ENCODE measurements at regions of chr4 and their contacts with region 1.

Region 1: DNA sequence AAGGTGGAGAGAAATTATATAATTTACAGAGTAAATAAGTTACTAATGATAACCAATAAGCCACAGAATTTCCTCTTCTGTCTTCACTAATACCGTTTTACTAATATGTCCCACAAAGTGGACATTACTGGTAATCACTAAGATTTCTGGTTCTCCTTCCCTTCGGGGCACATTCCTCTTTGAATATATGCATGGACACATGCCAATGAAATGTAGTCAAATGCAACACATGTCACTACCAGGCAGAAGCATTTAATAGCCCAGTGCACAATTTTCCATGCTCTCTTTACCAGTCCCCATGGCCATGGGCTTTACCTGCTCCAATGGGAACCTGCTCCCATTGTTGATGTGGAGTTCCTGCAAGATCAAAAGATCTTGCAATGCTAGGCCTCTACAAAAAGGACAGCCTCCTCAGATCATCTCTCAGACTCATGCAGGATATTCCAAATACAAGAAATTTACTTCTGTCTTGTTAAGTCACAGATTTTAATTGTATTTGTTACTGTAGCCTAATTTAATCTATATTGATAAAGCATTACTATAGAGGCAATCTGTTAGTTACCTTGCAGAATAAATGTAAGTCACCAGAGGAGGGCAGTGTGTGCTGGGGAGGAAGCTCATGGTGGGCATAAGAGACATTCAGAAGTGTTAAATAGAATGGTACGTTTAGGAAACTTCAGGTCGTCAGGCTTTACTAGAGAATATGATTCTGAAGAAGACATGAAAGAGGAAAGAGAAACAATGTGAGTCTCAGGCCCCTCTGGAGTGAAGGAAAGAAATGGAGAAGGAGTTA is 37.1 kb upstream of the INPP4B start:
- DNase-seq: no peak
- H3K4me3 ChIP-seq: no peak overlapping the region
- H3K27ac ChIP-seq: no peak overlapping the region
- H3K4me1 ChIP-seq: no peaks in the 10 kb centered on the region
- H3K27me3 ChIP-seq: no peaks in the 10 kb centered on the region
- CTCF ChIP-seq: peak in 1 of 4 experiments; percentile 21
- POLR2A ChIP-seq: no peak

Region 2: GRCh38 chr4:143025081-143025704 is 142.0 kb after region 1 on chr4:
- intact Hi-C with region 1: loop called (anchors 5 kb)
- DNase-seq: no peak
- H3K4me3 ChIP-seq: no peak overlapping the region
- H3K27ac ChIP-seq: no peak overlapping the region
- H3K4me1 ChIP-seq: no peaks in the 10 kb centered on the region
- H3K27me3 ChIP-seq: no peaks in the 10 kb centered on the region
- CTCF ChIP-seq: no peak
- POLR2A ChIP-seq: no peak

Region 3: DNA sequence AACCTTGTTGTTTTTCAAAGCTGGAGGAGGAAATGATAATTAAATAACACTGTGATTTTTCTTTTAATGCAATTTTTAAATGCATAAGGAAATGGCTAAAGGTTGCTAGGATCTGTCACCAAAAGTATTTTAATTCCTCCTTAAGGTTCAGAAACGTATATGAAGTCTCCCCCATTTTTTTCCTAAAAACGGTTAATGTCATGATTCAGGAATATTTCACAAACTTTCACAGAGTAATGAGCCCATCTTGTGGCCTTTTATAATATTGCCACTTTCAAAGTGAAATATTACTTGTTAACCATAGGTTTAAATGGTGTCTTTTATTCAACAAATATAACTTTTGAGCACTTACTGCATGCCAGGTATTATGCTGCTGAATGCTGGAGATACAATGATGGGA is 202.0 kb after region 1 on chr4:
- intact Hi-C with region 1: loop called (anchors 10 kb)
- DNase-seq: no peak
- H3K4me3 ChIP-seq: no peak overlapping the region
- H3K27ac ChIP-seq: no peak overlapping the region
- H3K4me1 ChIP-seq: no peaks in the 10 kb centered on the region
- H3K27me3 ChIP-seq: no peaks in the 10 kb centered on the region
- CTCF ChIP-seq: peak in 1 of 4 experiments; percentile 9
- POLR2A ChIP-seq: no peak

Measured in prostate gland (tissue), 2 donors.